A549 (cell line): ENCODE measurements at regions of chr16 and their contacts with region 1.

Region 1: DNA sequence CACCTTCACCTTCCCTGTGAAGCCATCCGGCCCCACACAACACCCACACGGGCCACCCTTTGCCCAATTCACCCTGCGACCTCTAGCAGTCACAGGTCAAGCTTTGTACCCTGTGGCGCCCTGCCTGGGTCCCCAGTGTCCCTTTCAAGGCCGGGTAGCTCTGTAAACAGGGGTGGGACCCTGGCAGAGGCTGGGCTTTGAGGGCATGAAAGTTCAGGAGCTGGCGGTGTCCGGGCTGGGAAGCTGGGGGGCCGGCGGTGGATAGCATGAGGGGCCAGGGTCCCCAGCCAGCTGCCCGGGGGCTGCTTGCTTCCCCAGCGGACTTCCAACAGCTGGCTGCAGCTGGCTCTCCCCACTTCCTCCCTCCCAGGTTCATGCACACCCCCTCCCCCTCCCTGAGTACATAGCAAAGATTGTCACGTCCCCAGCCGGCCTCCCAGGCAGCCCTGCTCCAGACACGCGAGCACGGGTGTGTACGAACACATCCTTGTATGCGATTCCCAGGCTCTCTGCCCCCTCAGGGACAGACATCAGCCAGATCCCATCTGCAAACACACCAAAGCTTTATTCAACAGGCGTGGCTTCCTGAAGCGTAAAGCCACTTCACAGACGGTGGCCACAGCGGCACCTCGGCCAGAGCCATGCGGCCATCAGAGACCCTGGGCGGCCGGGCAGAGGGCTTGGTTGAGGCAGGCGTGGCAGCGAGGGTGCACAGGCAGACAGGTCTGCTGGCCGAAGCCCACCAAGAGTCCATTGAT is 8.2 kb downstream of the NTHL1 start:
- DNase-seq: peak; percentile 70 to 96
- ATAC-seq: peak; percentile 41 to 63; a peak in 5 of 6 replicates
- H3K4me3 ChIP-seq: no peak overlapping the region
- H3K27ac ChIP-seq: peak overlapping the region; percentile 90
- H3K4me1 ChIP-seq: peaks cover 96% of the 10 kb centered on the region
- CTCF ChIP-seq: no peak
- EP300 ChIP-seq: peak in 1 of 2 experiments; percentile 54; a peak in 1 of 5 replicates
- POLR2A ChIP-seq: no peak
- RAD21 ChIP-seq: no peak

Region 2: DNA sequence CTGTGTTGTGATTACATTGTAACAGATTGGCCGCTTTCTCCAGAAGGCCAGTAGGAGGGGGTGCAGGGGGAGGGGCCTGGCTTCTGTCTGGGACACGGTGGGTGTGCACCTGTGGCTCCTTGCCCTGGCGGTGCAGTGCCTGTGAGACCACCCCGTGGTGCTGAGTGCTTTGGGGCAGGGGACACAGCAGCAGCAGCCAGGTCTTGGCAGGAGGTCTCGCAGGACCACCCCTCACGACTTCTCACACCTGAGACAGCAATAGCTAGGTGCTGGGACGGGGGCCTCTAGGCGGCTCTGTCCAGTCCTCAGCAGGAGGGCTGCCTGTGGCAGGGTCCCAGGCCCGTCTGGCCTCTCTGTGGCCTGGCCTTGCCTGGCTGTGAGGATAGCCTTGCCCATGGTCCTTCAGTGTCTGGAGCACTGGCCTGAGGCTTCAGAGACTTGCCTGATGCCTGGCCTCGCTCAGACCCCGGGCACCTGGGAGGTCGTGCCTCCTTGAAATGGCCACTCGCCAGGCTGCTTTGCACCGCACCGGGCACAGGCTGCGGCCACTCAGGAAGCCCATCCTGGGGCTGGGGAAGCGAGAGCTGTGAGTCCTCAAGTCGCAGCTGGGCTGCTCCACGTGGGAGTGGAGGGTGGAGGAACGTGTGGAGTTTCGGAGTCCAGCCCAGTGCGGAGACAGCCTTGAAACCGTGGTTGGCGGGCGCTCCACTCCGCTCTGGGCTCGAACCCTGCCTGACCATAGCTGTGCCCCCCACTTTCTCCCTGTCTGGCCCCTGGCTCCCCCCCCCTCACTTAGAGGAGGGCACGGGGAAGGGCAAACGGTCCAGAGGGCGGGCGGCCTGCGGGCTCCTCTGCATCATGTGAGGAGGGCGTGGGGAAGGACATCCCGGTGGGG is 727.9 kb before region 1 on chr16:
- CTCF ChIA-PET with region 1: no interaction called
- POLR2A ChIA-PET with region 1: no interaction called
- DNase-seq: no peak
- ATAC-seq: no peak
- H3K4me3 ChIP-seq: peak overlapping the region; percentile 80
- H3K27ac ChIP-seq: peak overlapping the region; percentile 97 to 98; a peak in 3 of 6 replicates
- H3K4me1 ChIP-seq: peaks cover 19% of the 10 kb centered on the region
- CTCF ChIP-seq: no peak
- EP300 ChIP-seq: no peak
- POLR2A ChIP-seq: no peak
- RAD21 ChIP-seq: no peak

Region 3: GRCh38 chr16:2056681-2057407 is 17.4 kb after region 1 on chr16:
- CTCF ChIA-PET with region 1: interaction called, 12 read pairs
- POLR2A ChIA-PET with region 1: no interaction called
- DNase-seq: peak in 1 of 2 experiments; percentile 56
- ATAC-seq: peak; percentile 88 to 91
- H3K4me3 ChIP-seq: no peak overlapping the region
- H3K27ac ChIP-seq: no peak overlapping the region
- H3K4me1 ChIP-seq: no peaks in the 10 kb centered on the region
- CTCF ChIP-seq: no peak
- EP300 ChIP-seq: no peak
- POLR2A ChIP-seq: no peak
- RAD21 ChIP-seq: 0 out of 5 replicates have a peak, but pooled peaks of 1 of the 2 experiments have one; percentile 9